ENCODE measurements at regions of chr7 and their contacts with region 1.

Region 1: GRCh38 chr7:26078437-26079336 is 73.3 kb upstream of the NFE2L3 start:
- DNase-seq: peak; percentile 68 to 86 (median 80)
- ATAC-seq: peak; percentile 99
- H3K4me3 ChIP-seq: no peak overlapping the region
- H3K4me3 Mint-ChIP-seq: peak overlapping the region in 7 of 10 donors; percentile 30 to 68 (median 51)
- H3K27ac ChIP-seq: no peak overlapping the region
- H3K27ac Mint-ChIP-seq: no peak overlapping the region
- H3K4me1 ChIP-seq: peaks cover 0 to 10% of the 10 kb centered on the region in 2 donors
- H3K4me1 Mint-ChIP-seq: peaks cover 0 to 10% (median 6%) of the 10 kb centered on the region in 7 donors
- H3K27me3 ChIP-seq: peaks cover 0 to 6% of the 10 kb centered on the region in 2 donors
- H3K27me3 Mint-ChIP-seq: peaks cover 15 to 84% (median 33%) of the 10 kb centered on the region in 5 donors

Region 2: GRCh38 chr7:26101361-26102151 is 22.9 kb after region 1 on chr7:
- CTCF ChIA-PET with region 1: interaction called, 3 read pairs
- POLR2A ChIA-PET with region 1: no interaction called
- intact Hi-C with region 1: loop called in 1 of 2 experiments (anchors 2 kb)
- DNase-seq: peak in 3 of 9 donors; percentile 19 to 26 (median 25)
- ATAC-seq: peak; percentile 20
- H3K4me3 ChIP-seq: peak overlapping the region; percentile 29
- H3K4me3 Mint-ChIP-seq: peak overlapping the region in 9 of 10 donors; percentile 72 to 86 (median 82)
- H3K27ac ChIP-seq: no peak overlapping the region
- H3K27ac Mint-ChIP-seq: peak overlapping the region in 8 of 9 donors; percentile 82 to 98 (median 88)
- H3K4me1 ChIP-seq: peaks cover 0 to 41% of the 10 kb centered on the region in 2 donors
- H3K4me1 Mint-ChIP-seq: peaks cover 12 to 73% (median 48%) of the 10 kb centered on the region in 7 donors
- H3K27me3 ChIP-seq: no peaks in the 10 kb centered on the region
- H3K27me3 Mint-ChIP-seq: no peaks in the 10 kb centered on the region

Region 3: GRCh38 chr7:26112203-26112740 is 33.6 kb after region 1 on chr7:
- CTCF ChIA-PET with region 1: interaction called, 3 read pairs
- POLR2A ChIA-PET with region 1: no interaction called
- intact Hi-C with region 1: loop called in 1 of 2 experiments (anchors 5 kb)
- DNase-seq: peak in 4 of 9 donors; percentile 19 to 39 (median 28)
- ATAC-seq: no peak
- H3K4me3 ChIP-seq: no peak overlapping the region
- H3K4me3 Mint-ChIP-seq: peak overlapping the region in 1 of 10 donors; percentile 14
- H3K27ac ChIP-seq: no peak overlapping the region
- H3K27ac Mint-ChIP-seq: no peak overlapping the region
- H3K4me1 ChIP-seq: no peaks in the 10 kb centered on the region
- H3K4me1 Mint-ChIP-seq: peaks cover 2 to 19% (median 13%) of the 10 kb centered on the region in 7 donors
- H3K27me3 ChIP-seq: no peaks in the 10 kb centered on the region
- H3K27me3 Mint-ChIP-seq: peaks cover 0 to 9% (median 4%) of the 10 kb centered on the region in 5 donors

Region 4: GRCh38 chr7:26193432-26194207 is 114.9 kb after region 1 on chr7:
- CTCF ChIA-PET with region 1: interaction called, 15 read pairs
- POLR2A ChIA-PET with region 1: interaction called, 3 read pairs
- intact Hi-C with region 1: loop called in 1 of 2 experiments (anchors 1 kb)
- DNase-seq: no peak
- ATAC-seq: peak; percentile 17
- H3K4me3 ChIP-seq: no peak overlapping the region
- H3K4me3 Mint-ChIP-seq: peak overlapping the region; percentile 40 to 100 (median 72)
- H3K27ac ChIP-seq: peak overlapping the region; percentile 36
- H3K27ac Mint-ChIP-seq: peak overlapping the region; percentile 49 to 99 (median 81)
- H3K4me1 ChIP-seq: peaks cover 56 to 68% of the 10 kb centered on the region in 2 donors
- H3K4me1 Mint-ChIP-seq: peaks cover 65 to 92% (median 83%) of the 10 kb centered on the region in 7 donors
- H3K27me3 ChIP-seq: no peaks in the 10 kb centered on the region
- H3K27me3 Mint-ChIP-seq: no peaks in the 10 kb centered on the region

Region 5: DNA sequence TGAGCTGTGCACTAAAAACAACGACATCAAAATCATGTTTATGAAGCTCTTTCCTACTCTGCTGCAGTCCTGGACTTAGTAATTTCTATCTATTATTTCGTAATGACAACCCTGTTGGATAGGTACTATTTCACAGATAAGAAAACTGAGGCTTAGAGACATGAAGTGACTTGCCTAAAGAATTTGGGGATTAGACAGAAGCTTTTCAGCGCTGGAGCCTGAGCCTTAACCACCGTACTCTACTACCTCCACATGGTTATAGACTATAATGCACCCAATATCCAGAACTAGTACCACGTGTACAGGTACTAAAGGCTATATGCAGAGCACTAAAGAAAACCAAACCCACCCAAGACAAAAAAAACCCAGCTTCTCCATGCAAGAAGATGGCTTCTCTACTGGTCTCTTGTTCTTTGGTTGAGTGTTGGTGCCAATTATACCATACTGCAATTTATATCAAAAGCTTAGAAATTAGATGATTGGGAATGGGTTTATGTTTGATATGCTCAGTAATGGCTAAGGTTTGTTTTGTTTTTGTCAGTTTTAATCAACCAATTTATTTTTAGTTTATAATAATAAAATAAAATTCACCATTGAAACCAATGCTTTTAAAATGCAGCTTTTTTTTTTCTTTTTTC is 206.4 kb after region 1 on chr7:
- CTCF ChIA-PET with region 1: interaction called, 7 read pairs
- POLR2A ChIA-PET with region 1: no interaction called
- intact Hi-C with region 1: loop called in 1 of 2 experiments (anchors 1 kb)
- DNase-seq: peak in 6 of 9 donors; percentile 20 to 49 (median 30)
- ATAC-seq: peak; percentile 82
- H3K4me3 ChIP-seq: no peak overlapping the region
- H3K4me3 Mint-ChIP-seq: no peak overlapping the region
- H3K27ac ChIP-seq: no peak overlapping the region
- H3K27ac Mint-ChIP-seq: no peak overlapping the region
- H3K4me1 ChIP-seq: no peaks in the 10 kb centered on the region
- H3K4me1 Mint-ChIP-seq: peaks cover 0 to 6% (median 4%) of the 10 kb centered on the region in 7 donors
- H3K27me3 ChIP-seq: no peaks in the 10 kb centered on the region
- H3K27me3 Mint-ChIP-seq: peaks cover 0 to 19% (median 0%) of the 10 kb centered on the region in 5 donors

Measured in naive thymus-derived CD4-positive, alpha-beta T cell (primary cell).